Sigmoid colon (tissue), 7 donors: ENCODE measurements at regions of chr5 and their contacts with region 1.

Region 1: GRCh38 chr5:42858031-42858643 is 46.4 kb upstream of the SELENOP start:
- DNase-seq: no peak
- H3K4me3 ChIP-seq: no peak overlapping the region
- H3K27ac ChIP-seq: peak overlapping the region; percentile 19 to 52 (median 43)
- H3K4me1 ChIP-seq: peaks cover 0 to 13% (median 10%) of the 10 kb centered on the region in 4 donors
- H3K27me3 ChIP-seq: no peaks in the 10 kb centered on the region
- CTCF ChIP-seq: no peak
- EP300 ChIP-seq: no peak
- POLR2A ChIP-seq: no peak

Region 2: DNA sequence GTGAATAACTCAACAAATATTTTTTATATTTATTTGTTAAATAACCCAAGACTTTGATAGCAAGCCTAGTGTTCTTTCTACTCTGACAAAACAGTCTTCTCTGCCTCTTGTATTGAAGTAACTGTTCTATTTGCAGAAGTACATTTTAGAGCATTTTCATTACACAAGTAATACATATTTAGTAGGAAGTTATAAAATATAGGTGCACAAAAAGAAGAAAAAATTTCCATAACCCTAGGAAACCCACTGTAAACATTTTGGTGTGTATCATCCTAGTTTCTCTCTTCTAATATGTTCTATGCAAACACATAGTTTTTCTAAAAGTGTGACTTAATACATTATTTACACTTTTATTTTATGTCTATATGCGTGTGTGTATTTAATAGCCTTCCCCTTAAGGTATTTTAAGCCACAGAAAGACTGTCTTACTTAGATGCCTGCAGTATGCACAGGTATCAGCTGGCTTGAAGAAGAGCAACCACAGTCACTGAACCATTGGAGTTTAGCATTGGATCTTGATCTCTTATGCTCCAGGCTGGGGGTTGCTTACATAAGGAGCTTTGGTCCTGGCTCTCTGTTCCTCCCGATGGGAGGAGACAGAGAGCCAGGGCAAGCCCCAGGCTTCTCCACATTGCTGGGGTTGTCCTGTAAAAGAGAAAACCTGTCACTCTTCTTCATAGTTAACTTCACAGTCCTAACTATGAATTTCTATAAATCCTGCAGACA is 50.3 kb before region 1 on chr5:
- intact Hi-C with region 1: loop called (anchors 5 kb)
- DNase-seq: no peak
- H3K4me3 ChIP-seq: peak overlapping the region in 2 of 4 donors; percentile 2 to 51
- H3K27ac ChIP-seq: peak overlapping the region in 2 of 4 donors; percentile 1 to 77
- H3K4me1 ChIP-seq: peaks cover 0 to 16% (median 8%) of the 10 kb centered on the region in 4 donors
- H3K27me3 ChIP-seq: no peaks in the 10 kb centered on the region
- CTCF ChIP-seq: no peak
- EP300 ChIP-seq: no peak
- POLR2A ChIP-seq: no peak